Activated T-helper 2 cell treated with anti-CD3 and anti-CD28 coated beads, Interferon-gamma antibody, Interleukin-2, Interleukin-4, amounts not matched to agents 10 μg/mL and 5 μg/mL and 100 μg/mL, durations not matched to agents 14 hours and 24 hours and 36 hours (primary cell): ENCODE measurements at regions of chr10 and their contacts with region 1.

Region 1: DNA sequence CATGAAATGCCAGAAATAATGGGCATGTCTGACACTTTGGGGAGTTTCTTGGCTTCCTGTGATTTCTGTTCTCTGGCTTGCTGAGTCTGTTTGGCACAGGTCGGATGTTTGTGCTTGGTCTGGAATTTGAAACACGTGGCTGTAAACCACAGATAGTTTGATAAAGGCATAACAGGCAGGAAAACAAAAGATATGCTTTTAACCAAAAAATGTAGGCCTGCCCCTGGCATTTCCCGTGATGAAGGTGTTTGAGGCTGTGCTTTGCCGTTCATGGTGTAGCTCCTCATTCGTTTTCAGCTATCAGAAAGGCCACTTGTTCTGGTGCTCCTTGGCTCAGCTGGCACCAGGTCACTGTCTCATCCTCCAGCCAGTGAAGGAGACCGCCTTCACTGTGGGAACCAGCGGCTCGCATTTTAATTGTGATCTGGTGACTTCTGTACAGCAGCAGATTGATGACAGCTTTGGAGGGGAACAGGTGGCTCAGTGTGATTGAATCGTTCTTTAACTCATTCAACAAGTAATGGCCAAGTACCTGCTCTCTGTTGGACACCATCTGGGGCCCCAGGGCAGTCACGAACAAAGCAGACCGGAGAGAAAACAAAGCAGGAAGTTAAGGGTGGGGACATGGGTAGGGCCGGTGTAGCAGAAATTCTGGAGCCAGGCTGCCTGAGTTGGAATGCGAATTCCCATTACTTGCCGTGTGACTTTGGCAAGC is 111.5 kb downstream of the CCNY start:
- DNase-seq: peak; percentile 22
- H3K4me3 Mint-ChIP-seq: peak overlapping the region; percentile 68
- H3K27ac Mint-ChIP-seq: peak overlapping the region; percentile 89
- H3K4me1 Mint-ChIP-seq: peaks cover 64% of the 10 kb centered on the region
- H3K27me3 Mint-ChIP-seq: no peaks in the 10 kb centered on the region

Region 2: GRCh38 chr10:35412900-35413491 is 34.9 kb before region 1 on chr10:
- intact Hi-C with region 1: loop called (anchors 5 kb)
- DNase-seq: no peak
- H3K4me3 Mint-ChIP-seq: no peak overlapping the region
- H3K27ac Mint-ChIP-seq: no peak overlapping the region
- H3K4me1 Mint-ChIP-seq: peaks cover 23% of the 10 kb centered on the region
- H3K27me3 Mint-ChIP-seq: no peaks in the 10 kb centered on the region